CD8-positive, alpha-beta T cell (primary cell): ENCODE measurements at regions of chr17 and their contacts with region 1.

Region 1: GRCh38 chr17:49361902-49362722 is at the start of gene ZNF652:
- DNase-seq: peak; percentile 91 to 98 (median 95)
- ATAC-seq: peak; percentile 59
- H3K4me3 ChIP-seq: peak within 1 kb of the TSS; percentile 50 to 90
- H3K4me3 Mint-ChIP-seq: peak within 1 kb of the TSS; percentile 94
- H3K27ac ChIP-seq: peak within 1 kb of the TSS; percentile 58 to 75
- H3K27ac Mint-ChIP-seq: peak within 1 kb of the TSS; percentile 97
- H3K4me1 ChIP-seq: peaks cover 46% of the 10 kb centered on the region
- H3K4me1 Mint-ChIP-seq: peaks cover 68% of the 10 kb centered on the region
- H3K27me3 ChIP-seq: no peaks in the 10 kb centered on the region
- H3K27me3 Mint-ChIP-seq: no peaks in the 10 kb centered on the region
- CTCF ChIP-seq: no peak
- total RNA-seq, gene ZNF652: 28.1 to 28.6 TPM

Region 2: DNA sequence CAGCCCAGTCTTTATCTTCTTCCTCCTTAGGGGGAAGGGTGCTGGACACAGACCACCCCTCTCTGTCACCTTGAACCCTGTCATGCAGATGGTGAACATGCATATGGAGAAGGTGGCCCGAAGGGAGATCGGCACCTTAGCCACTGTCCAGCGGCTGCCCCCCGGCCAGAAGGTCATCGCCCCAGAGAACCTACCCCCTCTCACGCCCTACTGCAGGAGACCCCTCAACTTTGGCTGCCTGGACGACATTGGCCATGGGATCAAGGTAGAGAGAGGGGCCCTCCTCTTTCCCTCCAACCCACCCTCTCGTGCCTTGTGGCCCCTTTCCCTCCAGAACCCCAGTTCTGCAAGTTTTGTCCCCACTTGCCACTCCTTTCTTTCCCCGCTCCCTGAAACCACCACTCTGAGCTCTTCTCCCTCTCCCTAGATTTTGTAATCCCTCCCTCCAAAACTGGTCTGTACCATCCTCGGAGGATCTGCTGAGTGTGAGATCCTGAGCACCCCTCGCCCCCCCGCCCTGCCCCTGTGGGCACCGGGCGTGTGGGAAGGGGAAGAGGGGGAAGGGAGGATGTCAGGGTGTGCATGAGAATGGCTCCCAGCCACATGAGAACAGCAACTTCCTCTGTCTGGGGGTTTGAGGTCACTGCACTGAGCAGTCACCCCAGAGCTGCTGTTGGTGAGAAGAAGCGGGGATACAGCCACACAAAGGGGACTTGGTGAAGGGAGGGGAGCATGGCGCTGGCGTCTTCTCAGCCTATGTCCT is 144.3 kb before region 1 on chr17:
- CTCF ChIA-PET with region 1: no interaction called
- POLR2A ChIA-PET with region 1: no interaction called
- intact Hi-C with region 1: loop called (anchors 5 kb)
- DNase-seq: peak; percentile 60 to 96 (median 80)
- ATAC-seq: peak; percentile 76
- H3K4me3 ChIP-seq: peak overlapping the region; percentile 12 to 24
- H3K4me3 Mint-ChIP-seq: peak overlapping the region; percentile 81
- H3K27ac ChIP-seq: peak overlapping the region; percentile 49 to 80
- H3K27ac Mint-ChIP-seq: peak overlapping the region; percentile 95
- H3K4me1 ChIP-seq: peaks cover 77% of the 10 kb centered on the region
- H3K4me1 Mint-ChIP-seq: peaks cover 71% of the 10 kb centered on the region
- H3K27me3 ChIP-seq: no peaks in the 10 kb centered on the region
- H3K27me3 Mint-ChIP-seq: no peaks in the 10 kb centered on the region
- CTCF ChIP-seq: no peak

Region 3: GRCh38 chr17:49267912-49268311 is 94.2 kb before region 1 on chr17:
- CTCF ChIA-PET with region 1: no interaction called
- POLR2A ChIA-PET with region 1: no interaction called
- intact Hi-C with region 1: no loop called
- DNase-seq: no peak
- ATAC-seq: no peak
- H3K4me3 ChIP-seq: no peak overlapping the region
- H3K4me3 Mint-ChIP-seq: no peak overlapping the region
- H3K27ac ChIP-seq: no peak overlapping the region
- H3K27ac Mint-ChIP-seq: no peak overlapping the region
- H3K4me1 ChIP-seq: no peaks in the 10 kb centered on the region
- H3K4me1 Mint-ChIP-seq: no peaks in the 10 kb centered on the region
- H3K27me3 ChIP-seq: no peaks in the 10 kb centered on the region
- H3K27me3 Mint-ChIP-seq: peaks cover 10% of the 10 kb centered on the region
- CTCF ChIP-seq: no peak

Region 4: DNA sequence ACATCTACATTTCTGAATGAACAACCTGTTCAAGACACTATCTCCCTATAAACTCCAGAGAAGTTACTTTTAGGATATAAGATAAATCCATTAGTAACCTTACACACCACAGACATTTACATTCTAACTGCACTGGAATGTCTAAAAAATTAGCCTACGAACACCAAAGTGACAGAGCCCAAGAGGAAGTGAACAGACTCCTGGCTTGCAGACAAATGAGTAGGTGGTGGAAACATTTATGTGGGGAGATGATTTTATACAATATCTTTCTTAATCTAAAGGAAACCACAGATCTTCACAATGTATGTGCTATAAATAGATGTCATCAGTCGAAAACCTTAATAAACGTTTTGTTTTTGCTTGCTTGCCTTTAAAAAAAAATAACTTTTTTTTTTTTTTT is 18.8 kb before region 1 on chr17:
- CTCF ChIA-PET with region 1: interaction called, 21 read pairs
- POLR2A ChIA-PET with region 1: interaction called, 42 read pairs
- intact Hi-C with region 1: loop called (anchors 1 kb)
- DNase-seq: peak in 2 of 9 experiments; percentile 30 to 58
- ATAC-seq: peak; percentile 43
- H3K4me3 ChIP-seq: no peak overlapping the region
- H3K4me3 Mint-ChIP-seq: peak overlapping the region; percentile 70
- H3K27ac ChIP-seq: peak overlapping the region in 1 of 2 experiments; percentile 58
- H3K27ac Mint-ChIP-seq: peak overlapping the region; percentile 89
- H3K4me1 ChIP-seq: peaks cover 64% of the 10 kb centered on the region
- H3K4me1 Mint-ChIP-seq: peaks cover 65% of the 10 kb centered on the region
- H3K27me3 ChIP-seq: no peaks in the 10 kb centered on the region
- H3K27me3 Mint-ChIP-seq: no peaks in the 10 kb centered on the region
- CTCF ChIP-seq: no peak

Region 5: GRCh38 chr17:49407981-49408501 is 45.9 kb after region 1 on chr17:
- CTCF ChIA-PET with region 1: interaction called, 5 read pairs
- POLR2A ChIA-PET with region 1: interaction called, 4 read pairs
- intact Hi-C with region 1: loop called in 1 of 2 experiments (anchors 5 kb)
- DNase-seq: peak; percentile 76 to 90 (median 85)
- ATAC-seq: peak; percentile 97
- H3K4me3 ChIP-seq: no peak overlapping the region
- H3K4me3 Mint-ChIP-seq: no peak overlapping the region
- H3K27ac ChIP-seq: peak overlapping the region in 1 of 2 experiments; percentile 1
- H3K27ac Mint-ChIP-seq: peak overlapping the region; percentile 17
- H3K4me1 ChIP-seq: peaks cover 27% of the 10 kb centered on the region
- H3K4me1 Mint-ChIP-seq: peaks cover 36% of the 10 kb centered on the region
- H3K27me3 ChIP-seq: no peaks in the 10 kb centered on the region
- H3K27me3 Mint-ChIP-seq: no peaks in the 10 kb centered on the region
- CTCF ChIP-seq: peak; percentile 94

Region 6: DNA sequence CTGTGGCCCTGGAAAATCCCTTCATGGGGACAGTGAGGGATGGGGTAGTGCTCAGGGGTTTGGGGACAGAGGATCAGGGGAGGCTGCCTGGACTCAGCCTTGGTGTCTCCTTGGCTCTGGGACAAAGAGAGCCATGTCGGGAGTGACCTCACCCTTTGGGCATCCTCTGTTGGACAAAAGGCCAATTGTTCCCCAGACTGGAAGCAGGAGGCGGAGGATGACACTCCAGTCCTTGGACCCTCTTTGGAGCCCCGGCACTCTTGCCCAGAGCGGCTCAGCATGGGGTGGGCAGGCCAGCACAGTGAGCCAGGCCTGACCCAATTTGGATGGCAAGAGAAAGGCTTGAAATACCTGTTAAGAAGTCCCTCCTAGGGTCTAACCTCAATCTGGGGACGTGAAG is 91.9 kb after region 1 on chr17:
- CTCF ChIA-PET with region 1: no interaction called
- POLR2A ChIA-PET with region 1: no interaction called
- intact Hi-C with region 1: no loop called
- DNase-seq: no peak
- ATAC-seq: no peak
- H3K4me3 ChIP-seq: no peak overlapping the region
- H3K4me3 Mint-ChIP-seq: no peak overlapping the region
- H3K27ac ChIP-seq: no peak overlapping the region
- H3K27ac Mint-ChIP-seq: no peak overlapping the region
- H3K4me1 ChIP-seq: peaks cover 8% of the 10 kb centered on the region
- H3K4me1 Mint-ChIP-seq: peaks cover 5% of the 10 kb centered on the region
- H3K27me3 ChIP-seq: no peaks in the 10 kb centered on the region
- H3K27me3 Mint-ChIP-seq: peaks cover 33% of the 10 kb centered on the region
- CTCF ChIP-seq: no peak

Region 7: GRCh38 chr17:50507871-50508572 is 1145.9 kb after region 1 on chr17 and contains the start of gene MYCBPAP:
- CTCF ChIA-PET with region 1: no interaction called
- POLR2A ChIA-PET with region 1: no interaction called
- intact Hi-C with region 1: loop called in 1 of 2 experiments (anchors 5 kb)
- DNase-seq: peak; percentile 68 to 91 (median 76)
- ATAC-seq: peak; percentile 73
- H3K4me3 ChIP-seq: peak within 1 kb of the TSS; percentile 68 to 77
- H3K4me3 Mint-ChIP-seq: peak within 1 kb of the TSS; percentile 95
- H3K27ac ChIP-seq: peak within 1 kb of the TSS; percentile 50 to 56
- H3K27ac Mint-ChIP-seq: peak within 1 kb of the TSS; percentile 94
- H3K4me1 ChIP-seq: peaks cover 22% of the 10 kb centered on the region
- H3K4me1 Mint-ChIP-seq: peaks cover 43% of the 10 kb centered on the region
- H3K27me3 ChIP-seq: no peaks in the 10 kb centered on the region
- H3K27me3 Mint-ChIP-seq: no peaks in the 10 kb centered on the region
- CTCF ChIP-seq: no peak
- total RNA-seq, gene MYCBPAP: 3.4 to 3.5 TPM